GM12878 (cell line): ENCODE measurements at regions of chr12 and their contacts with region 1.

Region 1: GRCh38 chr12:123468562-123469185 is 10.7 kb downstream of the SNRNP35 start:
- DNase-seq: peak; percentile 48
- ATAC-seq: peak; percentile 99
- H3K4me3 ChIP-seq: no peak overlapping the region
- H3K27ac ChIP-seq: no peak overlapping the region
- H3K4me1 ChIP-seq: no peaks in the 10 kb centered on the region
- H3K27me3 ChIP-seq: no peaks in the 10 kb centered on the region
- CTCF ChIP-seq: peak; percentile 53 to 70 (median 70); a peak in 5 of 6 replicates
- EP300 ChIP-seq: no peak
- POLR2A ChIP-seq: no peak
- RAD21 ChIP-seq: peak; percentile 77

Region 2: DNA sequence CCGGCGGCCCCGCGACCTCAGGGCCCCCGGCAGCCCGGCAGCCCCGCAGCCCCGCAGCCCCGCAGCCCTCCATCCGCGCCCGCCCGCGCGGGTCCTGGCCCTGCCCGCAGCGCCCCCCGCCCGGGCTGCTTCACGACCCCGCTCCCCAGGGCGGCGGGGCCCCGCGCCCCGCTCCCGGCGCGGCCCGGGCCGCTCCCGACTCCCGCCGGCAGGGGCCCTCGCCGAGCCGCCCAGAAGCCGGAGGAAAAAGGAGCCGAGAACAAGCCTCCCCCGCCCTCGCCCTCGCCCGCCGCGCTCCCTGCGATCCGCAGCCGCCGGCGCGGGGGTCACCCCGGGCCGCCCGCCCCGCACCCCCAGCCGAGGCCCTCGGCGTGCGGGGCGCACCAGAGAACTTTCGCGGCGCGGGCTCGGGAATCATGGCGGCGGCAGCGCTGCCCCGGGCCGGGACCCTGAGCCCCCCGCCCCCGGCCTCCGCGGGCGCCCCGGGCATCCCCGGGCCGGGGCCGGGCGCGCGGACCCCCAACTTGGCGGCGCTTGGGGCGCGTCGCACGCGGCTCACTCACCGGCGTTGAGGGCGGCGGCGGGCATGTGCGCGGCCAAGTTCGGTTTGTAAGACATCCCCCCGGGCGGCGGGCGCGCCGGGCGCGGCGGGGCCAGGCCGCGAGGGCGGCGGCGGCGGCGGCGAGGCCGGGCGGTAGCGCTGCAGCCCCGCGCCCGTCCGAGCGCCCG is 197.5 kb before region 1 on chr12:
- CTCF ChIA-PET with region 1: no interaction called
- POLR2A ChIA-PET with region 1: no interaction called
- RAD21 ChIA-PET with region 1: interaction called, 3 read pairs
- SMC1A ChIA-PET with region 1: interaction called, 3 read pairs
- in situ Hi-C with region 1: no loop called
- intact Hi-C with region 1: loop called (anchors 2 kb)
- DNase-seq: no peak
- ATAC-seq: peak; percentile 67
- H3K4me3 ChIP-seq: peak overlapping the region; percentile 95; the same call in 1 of the 2 replicates
- H3K27ac ChIP-seq: peak overlapping the region; percentile 82
- H3K4me1 ChIP-seq: peaks cover 17% of the 10 kb centered on the region
- H3K27me3 ChIP-seq: no peaks in the 10 kb centered on the region
- CTCF ChIP-seq: peak; percentile 28 to 76 (median 60); a peak in 4 of 6 replicates
- EP300 ChIP-seq: no peak
- POLR2A ChIP-seq: no peak
- RAD21 ChIP-seq: peak; percentile 74

Region 3: DNA sequence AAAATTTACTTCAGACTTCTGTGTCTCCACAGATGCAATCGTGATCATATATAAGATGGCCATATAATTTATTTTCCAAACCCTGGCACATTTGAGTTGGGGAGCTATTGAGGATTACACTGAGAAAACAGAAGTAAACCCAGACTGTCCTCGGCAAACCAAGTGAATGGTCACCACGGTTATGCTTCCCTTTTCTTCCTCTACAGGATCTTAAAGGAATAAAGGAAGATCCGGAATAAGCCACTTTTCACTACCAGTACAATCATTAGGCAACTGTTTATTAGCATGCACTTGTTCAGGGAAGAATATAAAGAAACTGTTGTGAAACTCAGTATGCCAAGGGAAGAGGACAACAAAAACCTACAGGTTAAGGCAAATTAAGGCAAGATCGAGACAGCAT is 131.6 kb before region 1 on chr12:
- CTCF ChIA-PET with region 1: interaction called, 3 read pairs
- POLR2A ChIA-PET with region 1: no interaction called
- RAD21 ChIA-PET with region 1: no interaction called
- SMC1A ChIA-PET with region 1: interaction called, 13 read pairs
- in situ Hi-C with region 1: no loop called
- intact Hi-C with region 1: no loop called
- DNase-seq: no peak
- ATAC-seq: no peak
- H3K4me3 ChIP-seq: no peak overlapping the region
- H3K27ac ChIP-seq: no peak overlapping the region
- H3K4me1 ChIP-seq: peaks cover 17% of the 10 kb centered on the region
- H3K27me3 ChIP-seq: no peaks in the 10 kb centered on the region
- CTCF ChIP-seq: no peak
- EP300 ChIP-seq: no peak
- POLR2A ChIP-seq: no peak
- RAD21 ChIP-seq: no peak